Motor neuron (in vitro differentiated cells): ENCODE measurements at regions of chr11 and their contacts with region 1.

Region 1: GRCh38 chr11:112255067-112255720 is 5.5 kb downstream of the PLET1 start:
- ATAC-seq: peak in 7 of 8 experiments; percentile 43 to 97 (median 90)
- H3K4me3 ChIP-seq: no peak overlapping the region
- H3K27ac ChIP-seq: peak overlapping the region in 1 of 2 donors; percentile 30
- H3K4me1 ChIP-seq: peaks cover 12 to 13% of the 10 kb centered on the region in 2 donors

Region 2: GRCh38 chr11:112086422-112087191 is 168.6 kb before region 1 on chr11 and contains the starts of genes SDHD and TIMM8B:
- in situ Hi-C with region 1: loop called in 1 of 9 experiments (anchors 25 kb)
- ATAC-seq: peak; percentile 90 to 98 (median 96)
- H3K4me3 ChIP-seq: peak within 1 kb of the TSS; percentile 80 to 97 (median 88)
- H3K27ac ChIP-seq: peak within 1 kb of the TSS; percentile 82 to 92
- H3K4me1 ChIP-seq: peaks cover 17 to 19% of the 10 kb centered on the region in 2 donors
- total RNA-seq, gene SDHD: 30.2 to 158 (median 59.3) TPM
- total RNA-seq, gene TIMM8B: 94.3 to 189 (median 128) TPM

Region 3: GRCh38 chr11:112459001-112459400 is 203.8 kb after region 1 on chr11:
- in situ Hi-C with region 1: no loop called
- ATAC-seq: no peak
- H3K4me3 ChIP-seq: no peak overlapping the region
- H3K27ac ChIP-seq: no peak overlapping the region
- H3K4me1 ChIP-seq: no peaks in the 10 kb centered on the region